Astrocyte of the cerebellum (primary cell): ENCODE measurements at regions of chr1 and their contacts with region 1.

Region 1: GRCh38 chr1:55284852-55285251 is 69.7 kb upstream of the USP24 start:
- DNase-seq: peak; percentile 26
- H3K4me3 ChIP-seq: no peak overlapping the region
- CTCF ChIP-seq: peak; percentile 64

Region 2: DNA sequence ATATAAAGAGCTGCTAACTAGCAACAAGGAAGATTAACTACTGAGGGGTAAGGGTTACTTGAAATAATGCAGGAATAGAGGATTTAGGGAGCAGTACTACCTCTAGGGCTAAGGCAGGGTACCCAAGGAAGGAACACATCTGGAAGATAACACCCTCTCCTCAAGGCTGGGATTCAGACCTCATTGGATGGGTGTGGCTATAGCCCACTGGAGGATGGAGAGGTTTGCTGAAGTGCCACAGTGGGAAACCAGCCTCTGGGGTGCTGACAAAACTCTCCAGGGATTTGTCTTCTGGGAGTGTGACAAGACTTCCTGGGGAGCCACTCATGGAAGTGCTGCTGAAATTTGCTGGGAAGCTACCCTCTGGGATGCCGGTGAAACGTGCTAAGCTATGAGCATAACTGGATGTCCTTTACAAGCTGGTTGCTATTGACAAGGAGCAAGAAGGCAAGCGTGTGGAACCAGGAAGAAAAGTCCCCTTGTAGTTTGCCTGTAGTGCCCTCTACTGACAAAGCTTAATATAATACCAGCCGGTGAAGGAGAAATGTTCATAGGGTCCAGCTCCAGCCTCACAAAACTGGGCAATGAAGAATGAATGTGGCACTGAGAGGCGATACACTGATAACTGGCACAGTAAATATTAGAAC is 53.1 kb after region 1 on chr1:
- in situ Hi-C with region 1: no loop called
- DNase-seq: peak; percentile 43
- H3K4me3 ChIP-seq: no peak overlapping the region
- CTCF ChIP-seq: peak; percentile 47

Region 3: DNA sequence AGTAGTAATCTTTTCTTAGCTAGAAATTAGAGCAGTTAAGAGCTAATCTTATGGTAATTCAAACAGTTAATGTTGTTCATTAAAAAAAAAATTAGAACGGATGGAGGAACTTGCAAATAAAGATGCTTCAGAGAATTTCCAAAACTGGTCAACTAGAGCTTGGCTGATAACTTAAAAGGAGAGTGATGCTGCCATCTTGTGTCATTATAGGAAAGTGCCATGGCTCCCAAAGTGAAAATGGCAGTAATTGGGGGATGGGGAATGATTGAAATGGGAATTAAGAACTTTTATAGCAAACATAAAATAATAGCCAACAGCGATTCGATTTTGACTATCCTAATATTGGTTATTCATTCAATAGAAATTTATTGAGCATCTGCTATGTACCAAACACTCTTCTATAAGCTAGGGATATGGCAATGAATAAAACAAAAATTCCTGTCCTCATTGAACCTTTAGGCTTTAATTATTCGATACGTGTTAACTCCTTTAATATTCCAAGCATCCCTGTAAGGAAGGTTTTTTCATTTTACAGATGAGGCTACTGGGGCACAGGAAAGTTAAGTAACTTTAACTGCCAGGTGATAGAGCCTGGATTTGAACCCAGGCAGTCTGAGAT is 1300.2 kb after region 1 on chr1:
- in situ Hi-C with region 1: loop called (anchors 5 kb)
- DNase-seq: peak; percentile 66
- H3K4me3 ChIP-seq: no peak overlapping the region
- CTCF ChIP-seq: peak; percentile 79